Panc1 (cell line): ENCODE measurements at regions of chr17 and their contacts with region 1.

Region 1: GRCh38 chr17:59600169-59600568 is 19.5 kb upstream of the CLTC start:
- DNase-seq: no peak
- ATAC-seq: no peak
- H3K4me3 ChIP-seq: no peak overlapping the region
- H3K27ac ChIP-seq: no peak overlapping the region
- H3K4me1 ChIP-seq: no peaks in the 10 kb centered on the region
- H3K27me3 ChIP-seq: no peaks in the 10 kb centered on the region
- CTCF ChIP-seq: no peak

Region 2: GRCh38 chr17:59547131-59547915 is 52.8 kb before region 1 on chr17:
- CTCF ChIA-PET with region 1: no interaction called
- POLR2A ChIA-PET with region 1: interaction called, 10 read pairs
- in situ Hi-C with region 1: no loop called
- intact Hi-C with region 1: no loop called
- DNase-seq: no peak
- ATAC-seq: no peak
- H3K4me3 ChIP-seq: no peak overlapping the region
- H3K27ac ChIP-seq: no peak overlapping the region
- H3K4me1 ChIP-seq: no peaks in the 10 kb centered on the region
- H3K27me3 ChIP-seq: no peaks in the 10 kb centered on the region
- CTCF ChIP-seq: no peak